BJ (cell line): ENCODE measurements at regions of chr3 and their contacts with region 1.

Region 1: DNA sequence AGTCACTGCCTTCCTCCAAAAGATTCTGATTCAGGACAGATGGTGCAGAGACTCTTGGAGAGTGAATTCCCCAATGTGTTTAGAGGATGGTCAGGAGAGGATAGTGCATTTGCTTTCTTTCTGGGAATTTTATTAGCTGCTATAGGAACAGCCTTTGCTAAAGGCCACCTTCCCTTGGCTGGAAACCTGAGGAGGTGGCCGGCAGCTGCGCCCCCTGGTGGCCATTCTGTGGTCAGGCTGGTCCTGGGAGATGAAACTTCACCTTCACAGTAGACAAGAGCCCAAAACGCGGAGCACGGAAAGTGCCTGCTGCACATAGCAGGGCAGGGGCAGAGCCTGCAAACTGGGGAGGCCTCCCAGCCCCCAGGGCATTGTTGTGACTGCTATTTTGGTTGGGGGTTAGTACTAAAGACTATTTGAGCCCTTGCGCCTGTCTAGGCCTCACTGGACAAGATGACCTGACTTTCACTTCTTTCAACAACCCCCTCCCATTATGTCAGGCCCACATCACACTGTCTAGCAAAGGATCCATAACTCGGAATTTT is 34.3 kb downstream of the SEC22C start:
- DNase-seq: peak; percentile 4
- H3K4me3 ChIP-seq: no peak overlapping the region
- H3K27me3 ChIP-seq: no peaks in the 10 kb centered on the region
- CTCF ChIP-seq: peak; percentile 99

Region 2: GRCh38 chr3:42562047-42562907 is 14.8 kb after region 1 on chr3:
- CTCF ChIA-PET with region 1: interaction called, 28 read pairs
- POLR2A ChIA-PET with region 1: no interaction called
- DNase-seq: no peak
- H3K4me3 ChIP-seq: no peak overlapping the region
- H3K27me3 ChIP-seq: no peaks in the 10 kb centered on the region
- CTCF ChIP-seq: no peak